ENCODE measurements at regions of chr6 and their contacts with region 1.

Region 1: GRCh38 chr6:63923139-63923739 is 287.6 kb downstream of the PHF3 start:
- DNase-seq: peak; percentile 54
- H3K4me3 ChIP-seq: no peak overlapping the region
- H3K27ac ChIP-seq: no peak overlapping the region
- H3K4me1 ChIP-seq: no peaks in the 10 kb centered on the region
- H3K27me3 ChIP-seq: peaks cover 25% of the 10 kb centered on the region

Region 2: GRCh38 chr6:64330694-64331307 is 407.6 kb after region 1 on chr6:
- in situ Hi-C with region 1: loop called (anchors 10 kb)
- DNase-seq: peak; percentile 69
- H3K4me3 ChIP-seq: no peak overlapping the region
- H3K27ac ChIP-seq: no peak overlapping the region
- H3K4me1 ChIP-seq: no peaks in the 10 kb centered on the region
- H3K27me3 ChIP-seq: no peaks in the 10 kb centered on the region

Region 3: DNA sequence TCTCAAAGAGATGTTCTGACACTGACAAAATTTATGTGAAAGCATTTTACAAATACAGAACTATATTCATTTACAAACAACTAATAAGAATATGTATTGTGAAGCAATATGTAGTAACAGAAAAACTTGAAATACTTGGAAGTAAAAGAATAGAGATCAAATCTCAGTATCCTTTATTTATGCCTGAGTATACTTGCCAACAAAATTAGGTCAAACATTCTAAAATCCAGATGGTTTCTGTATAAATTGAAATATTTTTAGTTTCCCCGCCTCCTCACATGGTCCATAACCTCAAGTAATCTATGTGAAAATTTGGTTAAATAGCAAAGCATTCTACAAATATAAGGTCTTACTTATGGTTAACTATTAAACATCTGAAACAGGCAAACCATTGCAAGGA is 1238.4 kb after region 1 on chr6:
- in situ Hi-C with region 1: no loop called
- DNase-seq: no peak
- H3K4me3 ChIP-seq: no peak overlapping the region
- H3K27ac ChIP-seq: no peak overlapping the region
- H3K4me1 ChIP-seq: no peaks in the 10 kb centered on the region
- H3K27me3 ChIP-seq: no peaks in the 10 kb centered on the region